AG04449 (cell line): ENCODE measurements at regions of chr17 and their contacts with region 1.

Region 1: DNA sequence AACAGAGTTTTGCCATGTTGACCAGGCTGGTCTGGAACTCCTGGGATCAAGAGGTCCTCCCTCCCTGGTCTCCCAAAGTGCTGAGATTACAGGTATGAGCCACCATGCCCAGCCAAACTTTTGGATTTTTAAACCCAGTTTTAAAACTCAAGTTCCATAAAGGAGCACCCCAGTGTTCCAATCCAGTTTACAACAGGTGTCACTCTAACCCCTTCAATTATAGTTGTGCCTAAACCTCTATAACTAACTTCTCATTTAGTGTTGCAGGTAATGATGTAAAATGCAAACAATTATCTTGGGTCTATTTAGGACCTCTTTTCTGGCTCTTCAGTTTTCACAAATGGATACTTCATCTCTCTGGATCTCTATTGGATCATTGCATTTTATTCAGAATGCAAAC is 7.8 kb upstream of the ADAP2 start:
- DNase-seq: no peak
- H3K4me3 ChIP-seq: no peak overlapping the region
- CTCF ChIP-seq: no peak

Region 2: GRCh38 chr17:30961209-30962188 is 47.5 kb after region 1 on chr17:
- CTCF ChIA-PET with region 1: no interaction called
- POLR2A ChIA-PET with region 1: interaction called, 10 read pairs
- DNase-seq: no peak
- H3K4me3 ChIP-seq: no peak overlapping the region
- CTCF ChIP-seq: no peak